ENCODE measurements at regions of chr12 and their contacts with region 1.

Region 1: GRCh38 chr12:27179400-27180214 is 64.5 kb upstream of the STK38L start:
- DNase-seq: peak; percentile 96
- ATAC-seq: peak; percentile 94
- H3K4me3 ChIP-seq: peak overlapping the region; percentile 23
- H3K27ac ChIP-seq: peak overlapping the region; percentile 94
- H3K4me1 ChIP-seq: peaks cover 37% of the 10 kb centered on the region
- H3K27me3 ChIP-seq: no peaks in the 10 kb centered on the region
- CTCF ChIP-seq: no peak
- EP300 ChIP-seq: peak; percentile 27 to 48; a peak in 1 of 4 replicates
- POLR2A ChIP-seq: 0 out of 2 replicates have a peak, but pooled peaks have one; percentile 22
- RAD21 ChIP-seq: no peak

Region 2: DNA sequence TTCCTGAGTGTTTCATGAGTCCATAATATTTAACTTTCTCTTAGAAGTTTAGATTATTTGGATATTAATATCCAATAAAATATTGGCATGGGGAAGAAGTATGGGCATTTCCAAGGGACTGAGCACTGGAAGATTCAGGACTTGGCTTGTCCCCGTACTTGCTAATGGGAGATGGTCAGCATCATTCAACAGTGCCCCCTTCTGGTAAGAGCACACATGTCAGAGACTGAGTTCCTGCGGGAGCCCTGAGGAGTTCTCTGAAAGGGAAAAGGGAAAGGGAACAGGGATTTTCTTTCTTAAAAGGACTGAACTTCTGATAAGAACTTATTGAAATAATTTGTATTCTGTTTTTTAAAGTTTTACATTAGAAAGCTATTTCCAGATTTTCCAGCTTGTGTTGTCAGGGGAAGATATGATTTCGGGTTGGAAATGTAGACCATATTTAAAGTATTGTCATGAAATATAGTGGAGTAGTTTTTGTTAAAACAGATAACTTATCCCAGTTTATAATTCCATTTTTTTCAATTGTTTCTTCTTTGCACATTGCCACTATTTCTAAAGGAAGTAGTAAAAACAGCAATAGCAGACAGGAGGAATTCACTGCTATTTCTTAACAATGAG is 37.4 kb before region 1 on chr12:
- CTCF ChIA-PET with region 1: interaction called, 23 read pairs
- POLR2A ChIA-PET with region 1: interaction called, 12 read pairs
- RAD21 ChIA-PET with region 1: interaction called, 16 read pairs
- SMC1A ChIA-PET with region 1: interaction called, 123 read pairs
- in situ Hi-C with region 1: no loop called
- intact Hi-C with region 1: loop called (anchors 2 kb)
- DNase-seq: no peak
- ATAC-seq: peak; percentile 80
- H3K4me3 ChIP-seq: no peak overlapping the region
- H3K27ac ChIP-seq: no peak overlapping the region
- H3K4me1 ChIP-seq: peaks cover 9% of the 10 kb centered on the region; the same call in 1 of the 2 replicates
- H3K27me3 ChIP-seq: no peaks in the 10 kb centered on the region
- CTCF ChIP-seq: peak; percentile 72 to 79 (median 76)
- EP300 ChIP-seq: no peak
- POLR2A ChIP-seq: no peak
- RAD21 ChIP-seq: peak; percentile 87

Region 3: DNA sequence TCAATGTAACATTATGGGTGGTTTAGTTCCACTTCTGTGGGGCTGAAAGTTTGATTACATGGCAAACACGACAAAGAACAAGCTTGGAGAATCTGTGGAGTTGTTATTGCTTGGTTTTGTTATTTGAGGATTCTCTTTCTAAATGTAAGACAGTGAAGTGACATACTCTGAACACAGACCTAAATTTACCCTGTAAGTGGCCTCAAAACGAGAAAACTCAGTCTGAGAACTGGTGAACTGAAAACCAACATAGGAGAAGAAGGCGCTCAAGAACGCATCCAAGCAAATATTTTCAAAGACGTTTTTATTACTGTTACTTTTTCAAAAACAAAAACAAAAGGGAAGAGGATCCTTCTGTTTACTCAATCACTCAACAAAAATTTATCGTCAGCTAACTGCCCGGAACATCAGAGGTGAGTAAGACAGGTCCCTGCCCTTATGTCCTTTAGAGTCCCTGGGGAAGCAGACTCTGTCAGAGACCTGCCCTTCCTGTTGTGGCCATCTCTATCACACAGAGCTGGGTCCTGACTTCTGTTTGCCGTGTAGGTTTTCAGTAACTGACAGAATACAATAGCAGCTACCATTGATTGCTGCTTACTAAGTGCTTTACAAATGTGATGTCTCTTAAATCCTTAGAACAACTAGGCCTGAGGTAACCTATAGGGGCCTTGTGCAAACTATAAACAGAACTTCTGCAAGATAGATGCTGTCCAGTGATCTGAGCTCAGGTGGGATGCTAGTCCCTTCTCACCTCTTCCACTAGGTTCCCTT is 18.0 kb before region 1 on chr12:
- CTCF ChIA-PET with region 1: interaction called, 19 read pairs
- POLR2A ChIA-PET with region 1: interaction called, 29 read pairs
- RAD21 ChIA-PET with region 1: interaction called, 85 read pairs
- SMC1A ChIA-PET with region 1: interaction called, 140 read pairs
- in situ Hi-C with region 1: no loop called
- intact Hi-C with region 1: no loop called
- DNase-seq: peak; percentile 62
- ATAC-seq: peak; percentile 93
- H3K4me3 ChIP-seq: peak overlapping the region; percentile 15; the same call in 1 of the 2 replicates
- H3K27ac ChIP-seq: peak overlapping the region; percentile 64
- H3K4me1 ChIP-seq: peaks cover 3% of the 10 kb centered on the region; the same call in 1 of the 2 replicates
- H3K27me3 ChIP-seq: no peaks in the 10 kb centered on the region
- CTCF ChIP-seq: no peak
- EP300 ChIP-seq: no peak
- POLR2A ChIP-seq: no peak
- RAD21 ChIP-seq: no peak

Region 4: DNA sequence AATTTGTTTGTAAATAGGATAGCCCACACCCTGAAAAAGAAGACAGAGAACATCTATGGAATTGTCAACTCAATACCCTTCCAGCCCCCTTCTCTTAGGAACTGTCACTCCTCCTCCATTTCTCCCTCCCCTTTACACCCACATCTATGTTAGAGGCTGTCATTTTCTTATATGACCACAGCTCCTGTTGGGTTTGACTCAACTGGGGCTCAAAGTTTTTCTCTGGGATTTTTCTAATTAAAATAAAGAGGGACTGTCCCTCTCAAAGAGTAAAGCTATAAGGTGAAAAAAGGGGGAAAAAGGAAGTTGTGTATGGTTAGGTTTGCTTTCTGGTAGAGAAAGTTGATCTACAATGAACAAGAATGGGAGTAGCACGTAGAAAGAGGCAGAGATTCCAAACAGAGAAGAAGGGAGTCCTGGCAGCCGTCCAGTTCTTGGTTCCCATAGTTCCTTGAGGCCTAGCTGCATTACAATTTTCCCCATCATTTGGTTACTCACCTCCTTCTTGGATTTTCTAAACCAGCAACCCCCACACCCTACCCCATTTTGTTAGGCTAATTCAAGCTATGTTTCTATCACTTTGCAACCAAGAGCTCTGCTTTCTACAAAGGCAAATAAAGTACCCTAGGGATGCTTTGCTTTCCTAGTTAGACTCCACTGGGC is 20.2 kb after region 1 on chr12:
- CTCF ChIA-PET with region 1: interaction called, 5 read pairs
- POLR2A ChIA-PET with region 1: interaction called, 19 read pairs
- RAD21 ChIA-PET with region 1: interaction called, 28 read pairs
- SMC1A ChIA-PET with region 1: interaction called, 139 read pairs
- in situ Hi-C with region 1: no loop called
- intact Hi-C with region 1: no loop called
- DNase-seq: no peak
- ATAC-seq: peak; percentile 41; the same call in 2 of the 3 replicates
- H3K4me3 ChIP-seq: no peak overlapping the region
- H3K27ac ChIP-seq: no peak overlapping the region
- H3K4me1 ChIP-seq: peaks cover 6% of the 10 kb centered on the region; the same call in 1 of the 2 replicates
- H3K27me3 ChIP-seq: no peaks in the 10 kb centered on the region
- CTCF ChIP-seq: no peak
- EP300 ChIP-seq: no peak
- POLR2A ChIP-seq: no peak
- RAD21 ChIP-seq: no peak

Region 5: DNA sequence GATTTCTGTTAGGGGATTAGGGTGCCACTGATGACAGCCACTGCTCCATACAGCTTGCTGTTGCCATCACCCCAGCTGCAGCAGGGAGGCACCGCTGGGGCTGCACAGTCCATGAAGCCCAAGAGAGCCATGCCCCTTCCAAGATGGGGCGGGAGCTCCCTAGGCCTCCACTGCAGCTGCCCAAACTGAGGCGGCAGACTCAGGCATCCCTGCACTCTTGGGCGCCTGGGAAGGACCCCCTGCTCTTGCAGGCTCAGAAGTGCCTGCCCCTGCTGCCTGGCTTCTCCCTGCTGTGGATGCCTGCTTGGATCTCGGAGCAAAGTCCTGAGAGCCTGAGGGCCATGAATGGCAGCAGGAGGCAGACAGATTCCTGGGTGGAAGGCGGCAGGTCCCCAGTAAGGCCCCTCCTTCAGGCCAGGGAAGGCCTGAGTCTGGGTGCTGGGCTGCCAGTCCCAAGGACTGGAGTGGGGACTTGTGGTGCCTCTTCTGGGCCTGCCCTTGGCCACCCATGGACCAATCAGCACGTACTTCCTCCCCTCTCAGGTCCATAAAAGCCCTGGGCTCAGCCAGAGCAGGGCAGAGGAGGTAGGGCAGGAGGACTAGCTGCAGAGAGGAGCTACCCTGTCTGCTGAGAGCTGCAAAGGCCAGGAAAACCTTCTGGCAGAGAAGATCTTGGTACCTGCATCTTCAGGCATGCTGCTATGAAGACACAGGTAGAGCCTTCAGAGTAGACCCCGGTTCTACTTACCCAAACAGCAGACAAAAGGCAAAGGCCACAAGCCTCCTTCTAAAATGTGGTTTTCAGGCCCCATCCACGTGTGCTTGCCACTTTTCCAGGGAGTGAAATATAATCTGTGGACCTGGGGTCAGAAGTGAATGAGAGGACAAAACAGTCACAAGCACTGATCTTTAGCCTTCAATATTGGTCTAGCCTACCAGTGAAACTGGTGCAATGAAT is 34.5 kb after region 1 on chr12:
- CTCF ChIA-PET with region 1: interaction called, 24 read pairs
- POLR2A ChIA-PET with region 1: interaction called, 20 read pairs
- RAD21 ChIA-PET with region 1: interaction called, 79 read pairs
- SMC1A ChIA-PET with region 1: interaction called, 139 read pairs
- in situ Hi-C with region 1: no loop called
- intact Hi-C with region 1: no loop called
- DNase-seq: no peak
- ATAC-seq: no peak
- H3K4me3 ChIP-seq: no peak overlapping the region
- H3K27ac ChIP-seq: no peak overlapping the region; the same call in 1 of the 2 replicates
- H3K4me1 ChIP-seq: peaks cover 12% of the 10 kb centered on the region
- H3K27me3 ChIP-seq: no peaks in the 10 kb centered on the region
- CTCF ChIP-seq: no peak
- EP300 ChIP-seq: no peak
- POLR2A ChIP-seq: no peak
- RAD21 ChIP-seq: no peak

Region 6: GRCh38 chr12:27277846-27278260 is 98.2 kb after region 1 on chr12:
- CTCF ChIA-PET with region 1: interaction called, 6 read pairs
- POLR2A ChIA-PET with region 1: interaction called, 6 read pairs
- RAD21 ChIA-PET with region 1: interaction called, 18 read pairs
- SMC1A ChIA-PET with region 1: interaction called, 25 read pairs
- in situ Hi-C with region 1: no loop called
- intact Hi-C with region 1: no loop called
- DNase-seq: peak; percentile 73
- ATAC-seq: peak; percentile 91
- H3K4me3 ChIP-seq: no peak overlapping the region
- H3K27ac ChIP-seq: peak overlapping the region; percentile 61; the same call in 1 of the 2 replicates
- H3K4me1 ChIP-seq: peaks cover 22% of the 10 kb centered on the region
- H3K27me3 ChIP-seq: no peaks in the 10 kb centered on the region
- CTCF ChIP-seq: no peak
- EP300 ChIP-seq: peak; percentile 64 to 71; a peak in 3 of 4 replicates
- POLR2A ChIP-seq: no peak
- RAD21 ChIP-seq: no peak